ENCODE measurements at regions of chr4 and their contacts with region 1.

Region 1: GRCh38 chr4:79576429-79576753 is 168.4 kb upstream of the GK2 start:
- DNase-seq: peak in 1 of 2 experiments; percentile 38
- H3K4me3 ChIP-seq: no peak overlapping the region
- H3K4me3 Mint-ChIP-seq: no peak overlapping the region
- H3K27ac Mint-ChIP-seq: no peak overlapping the region
- H3K4me1 ChIP-seq: no peaks in the 10 kb centered on the region
- H3K4me1 Mint-ChIP-seq: no peaks in the 10 kb centered on the region
- H3K27me3 ChIP-seq: no peaks in the 10 kb centered on the region
- H3K27me3 Mint-ChIP-seq: no peaks in the 10 kb centered on the region
- CTCF ChIP-seq: peak; percentile 34 to 56

Region 2: DNA sequence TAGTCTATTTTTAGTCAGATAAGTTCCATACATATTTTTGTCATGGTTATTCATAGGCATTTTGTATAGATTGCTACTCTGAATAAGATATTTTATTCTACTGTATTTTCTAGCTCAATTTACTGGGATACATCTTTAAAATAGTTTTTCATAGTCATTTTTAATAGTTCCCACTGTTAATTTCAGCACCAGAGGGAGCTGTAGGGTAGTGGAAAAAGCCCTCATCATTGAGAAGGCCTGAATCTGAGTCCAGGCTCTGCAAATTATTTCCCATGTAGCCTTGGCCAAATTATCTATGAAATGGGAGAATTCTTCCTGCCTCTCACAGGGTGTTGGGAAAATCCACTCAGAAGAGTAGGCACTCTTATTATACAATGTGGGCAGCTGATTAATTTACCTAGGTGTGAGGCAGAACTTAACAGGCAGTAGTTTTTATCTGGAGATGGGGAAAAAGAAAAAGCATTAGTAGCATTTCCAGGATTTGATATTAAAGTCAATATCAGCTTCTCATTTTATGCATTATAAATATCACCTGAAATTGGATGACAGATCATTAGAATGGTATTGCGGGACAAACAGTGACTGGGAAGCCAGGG is 534.2 kb before region 1 on chr4:
- CTCF ChIA-PET with region 1: interaction called, 3 read pairs
- POLR2A ChIA-PET with region 1: no interaction called
- intact Hi-C with region 1: loop called (anchors 1 kb)
- DNase-seq: peak in 1 of 2 experiments; percentile 31
- H3K4me3 ChIP-seq: no peak overlapping the region
- H3K4me3 Mint-ChIP-seq: no peak overlapping the region
- H3K27ac Mint-ChIP-seq: no peak overlapping the region
- H3K4me1 ChIP-seq: peaks cover 4% of the 10 kb centered on the region; the same call in 1 of the 2 replicates
- H3K4me1 Mint-ChIP-seq: peaks cover 13% of the 10 kb centered on the region
- H3K27me3 ChIP-seq: no peaks in the 10 kb centered on the region
- H3K27me3 Mint-ChIP-seq: no peaks in the 10 kb centered on the region
- CTCF ChIP-seq: peak; percentile 44 to 50

Region 3: DNA sequence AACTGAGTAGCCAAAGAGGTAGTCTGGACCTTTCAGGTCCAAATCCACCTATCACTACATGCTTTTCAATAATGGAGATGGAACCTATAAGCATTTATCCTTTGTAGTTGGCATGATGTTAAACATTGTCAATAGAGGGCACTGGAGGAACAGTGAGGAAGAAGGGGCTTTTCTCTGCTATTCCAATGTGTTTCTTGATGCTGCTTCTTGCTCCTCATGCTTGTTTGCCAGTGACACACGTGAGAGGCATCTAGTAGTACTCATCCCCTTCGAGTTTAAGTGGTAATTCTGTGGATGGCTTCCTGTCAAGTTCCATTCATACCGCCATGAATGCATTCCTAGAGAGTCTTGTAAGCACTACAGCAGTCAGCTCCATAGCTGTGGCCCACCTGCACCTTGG is 334.5 kb before region 1 on chr4:
- CTCF ChIA-PET with region 1: no interaction called
- POLR2A ChIA-PET with region 1: no interaction called
- intact Hi-C with region 1: loop called (anchors 1 kb)
- DNase-seq: peak in 1 of 2 experiments; percentile 10
- H3K4me3 ChIP-seq: no peak overlapping the region
- H3K4me3 Mint-ChIP-seq: no peak overlapping the region
- H3K27ac Mint-ChIP-seq: no peak overlapping the region
- H3K4me1 ChIP-seq: no peaks in the 10 kb centered on the region
- H3K4me1 Mint-ChIP-seq: no peaks in the 10 kb centered on the region
- H3K27me3 ChIP-seq: no peaks in the 10 kb centered on the region
- H3K27me3 Mint-ChIP-seq: no peaks in the 10 kb centered on the region
- CTCF ChIP-seq: no peak

Region 4: GRCh38 chr4:79325864-79326328 is 250.5 kb before region 1 on chr4 and contains the start of gene NAA11:
- CTCF ChIA-PET with region 1: no interaction called
- POLR2A ChIA-PET with region 1: no interaction called
- intact Hi-C with region 1: loop called (anchors 10 kb)
- DNase-seq: no peak
- H3K4me3 ChIP-seq: no peak within 1 kb of the TSS
- H3K4me3 Mint-ChIP-seq: no peak within 1 kb of the TSS
- H3K27ac Mint-ChIP-seq: no peak within 1 kb of the TSS
- H3K4me1 ChIP-seq: no peaks in the 10 kb centered on the region
- H3K4me1 Mint-ChIP-seq: no peaks in the 10 kb centered on the region
- H3K27me3 ChIP-seq: no peaks in the 10 kb centered on the region
- H3K27me3 Mint-ChIP-seq: no peaks in the 10 kb centered on the region
- CTCF ChIP-seq: no peak
- total RNA-seq, gene NAA11: not detected in 2 replicates

Measured in Caco-2 (cell line).